ENCODE measurements at regions of chr9 and their contacts with region 1.

Region 1: DNA sequence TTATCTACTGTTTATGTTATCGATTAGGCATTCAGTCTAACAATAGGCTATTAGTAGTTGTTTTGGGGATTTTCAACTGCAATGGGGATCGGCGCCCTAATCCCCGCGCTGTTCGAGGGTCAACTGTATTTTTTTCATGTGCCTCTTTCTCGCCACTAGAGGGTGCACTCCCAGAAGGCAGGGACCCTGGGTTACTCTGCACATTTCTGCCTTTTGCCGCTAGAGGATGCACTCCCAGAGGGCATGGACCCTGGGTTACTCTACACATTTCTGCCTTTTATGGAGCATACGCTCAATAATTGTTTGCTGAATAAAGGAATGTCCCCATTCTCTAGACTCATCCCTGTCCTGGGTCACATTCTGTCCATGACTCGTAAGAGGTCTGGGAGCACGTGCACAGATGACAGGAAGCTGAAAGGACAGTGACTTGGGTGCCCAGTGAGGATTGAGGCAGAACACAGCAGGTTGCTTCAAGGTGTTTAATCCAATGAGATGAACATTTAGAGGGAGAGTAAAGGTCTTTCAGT is 27.9 kb upstream of the RECK start:
- DNase-seq: peak; percentile 83
- ATAC-seq: peak; percentile 99
- H3K4me3 Mint-ChIP-seq: no peak overlapping the region
- H3K27ac Mint-ChIP-seq: no peak overlapping the region
- H3K4me1 Mint-ChIP-seq: peaks cover 13% of the 10 kb centered on the region
- H3K27me3 Mint-ChIP-seq: peaks cover 28% of the 10 kb centered on the region
- CTCF ChIP-seq: peak; percentile 99

Region 2: DNA sequence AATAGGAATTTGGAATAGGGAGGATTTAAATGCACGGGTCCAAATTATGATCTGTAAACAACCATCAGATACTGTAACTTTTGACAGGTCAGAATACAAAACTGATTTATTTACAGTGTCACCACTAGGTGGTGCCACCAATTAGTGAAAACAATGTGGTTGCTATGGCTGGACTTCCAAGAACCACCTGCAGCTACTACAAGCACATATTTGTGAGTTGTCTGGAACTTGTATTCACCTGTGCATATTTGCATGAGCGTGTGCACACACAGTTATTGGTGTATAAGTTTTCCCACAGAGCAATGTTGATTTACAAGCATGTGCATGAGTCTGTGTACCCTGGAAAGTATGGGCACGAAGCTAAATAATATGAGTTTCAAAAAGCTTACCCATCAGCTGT is 105.8 kb before region 1 on chr9:
- CTCF ChIA-PET with region 1: interaction called, 12 read pairs
- POLR2A ChIA-PET with region 1: no interaction called
- intact Hi-C with region 1: no loop called
- DNase-seq: peak; percentile 35
- ATAC-seq: peak; percentile 67
- H3K4me3 Mint-ChIP-seq: no peak overlapping the region
- H3K27ac Mint-ChIP-seq: no peak overlapping the region
- H3K4me1 Mint-ChIP-seq: peaks cover 9% of the 10 kb centered on the region
- H3K27me3 Mint-ChIP-seq: peaks cover 3% of the 10 kb centered on the region
- CTCF ChIP-seq: peak; percentile 93

Region 3: GRCh38 chr9:35954942-35955546 is 53.8 kb before region 1 on chr9:
- CTCF ChIA-PET with region 1: interaction called, 24 read pairs
- POLR2A ChIA-PET with region 1: no interaction called
- intact Hi-C with region 1: no loop called
- DNase-seq: peak; percentile 67
- ATAC-seq: peak; percentile 80
- H3K4me3 Mint-ChIP-seq: no peak overlapping the region
- H3K27ac Mint-ChIP-seq: no peak overlapping the region
- H3K4me1 Mint-ChIP-seq: no peaks in the 10 kb centered on the region
- H3K27me3 Mint-ChIP-seq: peaks cover 4% of the 10 kb centered on the region
- CTCF ChIP-seq: peak; percentile 79

Region 4: DNA sequence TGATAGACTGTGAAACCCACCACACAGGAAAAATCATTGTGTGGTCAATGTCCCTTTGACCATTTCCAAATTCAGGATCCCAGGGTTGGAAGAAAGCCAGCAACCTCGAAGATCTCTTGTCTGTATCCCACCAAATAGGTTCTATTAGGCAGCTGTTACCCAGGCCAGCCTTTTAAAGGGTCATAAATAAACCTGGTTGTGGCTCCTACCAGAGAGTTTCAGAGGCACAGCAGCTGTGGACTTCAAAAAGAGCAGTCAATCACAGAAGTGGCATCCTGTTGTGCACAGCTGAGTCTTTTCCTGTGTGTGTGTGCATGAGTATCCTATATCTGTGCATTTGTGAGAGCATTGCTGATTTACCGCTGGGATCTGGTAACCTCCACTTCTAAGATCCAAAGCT is 27.1 kb before region 1 on chr9:
- CTCF ChIA-PET with region 1: interaction called, 19 read pairs
- POLR2A ChIA-PET with region 1: no interaction called
- intact Hi-C with region 1: no loop called
- DNase-seq: no peak
- ATAC-seq: no peak
- H3K4me3 Mint-ChIP-seq: no peak overlapping the region
- H3K27ac Mint-ChIP-seq: no peak overlapping the region
- H3K4me1 Mint-ChIP-seq: no peaks in the 10 kb centered on the region
- H3K27me3 Mint-ChIP-seq: peaks cover 16% of the 10 kb centered on the region
- CTCF ChIP-seq: no peak

Region 5: GRCh38 chr9:36023260-36024048 is 14.6 kb after region 1 on chr9:
- CTCF ChIA-PET with region 1: interaction called, 136 read pairs
- POLR2A ChIA-PET with region 1: interaction called, 4 read pairs
- intact Hi-C with region 1: no loop called
- DNase-seq: peak; percentile 78
- ATAC-seq: peak; percentile 75
- H3K4me3 Mint-ChIP-seq: no peak overlapping the region
- H3K27ac Mint-ChIP-seq: no peak overlapping the region
- H3K4me1 Mint-ChIP-seq: no peaks in the 10 kb centered on the region
- H3K27me3 Mint-ChIP-seq: no peaks in the 10 kb centered on the region
- CTCF ChIP-seq: peak; percentile 89

Region 6: GRCh38 chr9:36036780-36037548 is 28.1 kb after region 1 on chr9 and contains the start of gene RECK:
- CTCF ChIA-PET with region 1: interaction called, 12 read pairs
- POLR2A ChIA-PET with region 1: no interaction called
- intact Hi-C with region 1: no loop called
- DNase-seq: peak; percentile 94
- ATAC-seq: peak; percentile 97
- H3K4me3 Mint-ChIP-seq: peak within 1 kb of the TSS; percentile 81
- H3K27ac Mint-ChIP-seq: peak within 1 kb of the TSS; percentile 69
- H3K4me1 Mint-ChIP-seq: peaks cover 37% of the 10 kb centered on the region
- H3K27me3 Mint-ChIP-seq: no peaks in the 10 kb centered on the region
- CTCF ChIP-seq: no peak
- total RNA-seq, gene RECK: 5.3 to 6.5 TPM

Region 7: GRCh38 chr9:36166101-36166927 is 157.5 kb after region 1 on chr9:
- CTCF ChIA-PET with region 1: interaction called, 23 read pairs
- POLR2A ChIA-PET with region 1: no interaction called
- intact Hi-C with region 1: no loop called
- DNase-seq: peak; percentile 85
- ATAC-seq: peak; percentile 97
- H3K4me3 Mint-ChIP-seq: peak overlapping the region; percentile 70
- H3K27ac Mint-ChIP-seq: no peak overlapping the region
- H3K4me1 Mint-ChIP-seq: peaks cover 3% of the 10 kb centered on the region
- H3K27me3 Mint-ChIP-seq: no peaks in the 10 kb centered on the region
- CTCF ChIP-seq: peak; percentile 95

Region 8: GRCh38 chr9:36855448-36856315 is 846.8 kb after region 1 on chr9:
- CTCF ChIA-PET with region 1: no interaction called
- POLR2A ChIA-PET with region 1: no interaction called
- intact Hi-C with region 1: no loop called
- DNase-seq: peak; percentile 67
- ATAC-seq: peak; percentile 92
- H3K4me3 Mint-ChIP-seq: no peak overlapping the region
- H3K27ac Mint-ChIP-seq: no peak overlapping the region
- H3K4me1 Mint-ChIP-seq: peaks cover 5% of the 10 kb centered on the region
- H3K27me3 Mint-ChIP-seq: peaks cover 3% of the 10 kb centered on the region
- CTCF ChIP-seq: no peak

Measured in activated CD8-positive, alpha-beta T cell treated with anti-CD3 and anti-CD28 coated beads for 36 hours (primary cell).